Activated CD8-positive, alpha-beta T cell treated with anti-CD3 and anti-CD28 coated beads for 36 hours (primary cell): ENCODE measurements at regions of chr1 and their contacts with region 1.

Region 1: GRCh38 chr1:247390116-247390791 is 25.7 kb upstream of the NLRP3 start:
- DNase-seq: peak; percentile 92
- ATAC-seq: peak; percentile 99
- H3K4me3 Mint-ChIP-seq: peak overlapping the region; percentile 11
- H3K27ac Mint-ChIP-seq: peak overlapping the region; percentile 36
- H3K4me1 Mint-ChIP-seq: peaks cover 18% of the 10 kb centered on the region
- H3K27me3 Mint-ChIP-seq: no peaks in the 10 kb centered on the region
- CTCF ChIP-seq: peak; percentile 87

Region 2: GRCh38 chr1:247373721-247374141 is 16.5 kb before region 1 on chr1:
- CTCF ChIA-PET with region 1: interaction called, 31 read pairs
- POLR2A ChIA-PET with region 1: no interaction called
- intact Hi-C with region 1: no loop called
- DNase-seq: peak; percentile 80
- ATAC-seq: peak; percentile 82
- H3K4me3 Mint-ChIP-seq: peak overlapping the region; percentile 38
- H3K27ac Mint-ChIP-seq: no peak overlapping the region
- H3K4me1 Mint-ChIP-seq: peaks cover 6% of the 10 kb centered on the region
- H3K27me3 Mint-ChIP-seq: no peaks in the 10 kb centered on the region
- CTCF ChIP-seq: peak; percentile 49

Region 3: DNA sequence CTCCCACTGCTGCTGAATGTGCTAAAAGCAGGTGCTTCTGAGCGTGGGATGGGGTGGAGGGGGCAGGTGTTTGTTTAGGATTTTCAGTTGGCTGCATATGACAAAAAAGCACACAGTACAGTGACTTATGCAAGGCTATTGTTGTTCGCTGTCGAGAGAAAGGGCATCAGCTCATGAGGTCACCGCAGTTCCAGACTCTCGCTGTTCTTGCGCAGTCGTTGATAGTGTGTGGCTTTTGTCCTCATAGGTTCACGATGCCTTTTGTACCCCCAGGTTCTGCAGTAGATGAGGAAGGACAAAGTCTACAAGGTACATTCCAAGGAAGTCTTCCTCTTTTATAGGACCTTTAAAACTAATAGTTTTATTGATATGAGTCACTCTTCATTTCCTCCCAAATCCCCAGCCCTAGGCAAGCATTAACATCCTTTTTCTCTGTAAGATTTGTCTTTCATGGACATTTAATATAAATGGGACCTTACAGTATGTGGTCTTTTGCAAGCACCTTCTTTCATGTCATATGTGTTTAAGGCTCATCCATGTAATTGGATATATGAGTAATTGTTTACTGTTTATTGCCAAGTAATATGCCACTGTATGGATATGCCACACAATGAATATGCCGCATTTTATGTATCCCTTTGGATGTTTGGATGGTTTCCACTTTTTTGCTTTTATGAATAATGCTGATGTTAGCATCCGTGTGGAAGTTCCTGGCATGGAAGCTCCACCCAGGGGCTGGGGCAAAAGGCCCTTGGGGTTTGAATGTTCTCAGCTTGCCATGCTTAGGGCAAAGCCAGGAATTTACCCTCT is 11.3 kb after region 1 on chr1:
- CTCF ChIA-PET with region 1: interaction called, 11 read pairs
- POLR2A ChIA-PET with region 1: interaction called, 3 read pairs
- intact Hi-C with region 1: no loop called
- DNase-seq: no peak
- ATAC-seq: no peak
- H3K4me3 Mint-ChIP-seq: no peak overlapping the region
- H3K27ac Mint-ChIP-seq: no peak overlapping the region
- H3K4me1 Mint-ChIP-seq: peaks cover 1% of the 10 kb centered on the region
- H3K27me3 Mint-ChIP-seq: peaks cover 1% of the 10 kb centered on the region
- CTCF ChIP-seq: no peak

Region 4: GRCh38 chr1:247415423-247416361 is 25.4 kb after region 1 on chr1 and contains the start of gene NLRP3:
- CTCF ChIA-PET with region 1: interaction called, 29 read pairs
- POLR2A ChIA-PET with region 1: no interaction called
- intact Hi-C with region 1: no loop called
- DNase-seq: peak; percentile 66
- ATAC-seq: peak; percentile 78
- H3K4me3 Mint-ChIP-seq: peak within 1 kb of the TSS; percentile 76
- H3K27ac Mint-ChIP-seq: peak within 1 kb of the TSS; percentile 68
- H3K4me1 Mint-ChIP-seq: peaks cover 40% of the 10 kb centered on the region
- H3K27me3 Mint-ChIP-seq: no peaks in the 10 kb centered on the region
- CTCF ChIP-seq: no peak
- total RNA-seq, gene NLRP3: 3.2 to 3.6 TPM

Region 5: DNA sequence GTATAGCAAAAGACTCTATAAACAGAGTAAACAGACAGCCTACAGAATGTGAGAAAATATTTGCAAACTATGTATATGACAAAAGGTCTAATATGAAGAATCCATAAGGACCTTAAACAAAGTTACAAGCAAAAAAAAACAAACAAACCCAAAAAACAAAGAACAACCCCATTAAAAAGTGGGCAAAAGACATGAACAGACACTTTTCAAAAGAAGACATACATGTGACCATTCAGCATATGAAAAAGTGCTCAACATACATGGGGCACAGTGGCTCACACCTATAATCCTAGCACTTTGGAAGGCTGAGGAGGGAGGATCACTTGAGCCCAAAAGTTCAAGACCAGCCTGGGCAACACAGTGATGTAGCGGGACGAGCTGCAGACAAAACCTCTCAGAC is 85.5 kb after region 1 on chr1:
- CTCF ChIA-PET with region 1: interaction called, 15 read pairs
- POLR2A ChIA-PET with region 1: no interaction called
- intact Hi-C with region 1: no loop called
- DNase-seq: no peak
- ATAC-seq: no peak
- H3K4me3 Mint-ChIP-seq: no peak overlapping the region
- H3K27ac Mint-ChIP-seq: no peak overlapping the region
- H3K4me1 Mint-ChIP-seq: no peaks in the 10 kb centered on the region
- H3K27me3 Mint-ChIP-seq: no peaks in the 10 kb centered on the region
- CTCF ChIP-seq: no peak

Region 6: GRCh38 chr1:247487057-247487456 is 96.8 kb after region 1 on chr1:
- CTCF ChIA-PET with region 1: interaction called, 93 read pairs
- POLR2A ChIA-PET with region 1: no interaction called
- intact Hi-C with region 1: loop called (anchors 5 kb)
- DNase-seq: peak; percentile 37
- ATAC-seq: peak; percentile 70
- H3K4me3 Mint-ChIP-seq: no peak overlapping the region
- H3K27ac Mint-ChIP-seq: no peak overlapping the region
- H3K4me1 Mint-ChIP-seq: no peaks in the 10 kb centered on the region
- H3K27me3 Mint-ChIP-seq: peaks cover 10% of the 10 kb centered on the region
- CTCF ChIP-seq: peak; percentile 77

Region 7: DNA sequence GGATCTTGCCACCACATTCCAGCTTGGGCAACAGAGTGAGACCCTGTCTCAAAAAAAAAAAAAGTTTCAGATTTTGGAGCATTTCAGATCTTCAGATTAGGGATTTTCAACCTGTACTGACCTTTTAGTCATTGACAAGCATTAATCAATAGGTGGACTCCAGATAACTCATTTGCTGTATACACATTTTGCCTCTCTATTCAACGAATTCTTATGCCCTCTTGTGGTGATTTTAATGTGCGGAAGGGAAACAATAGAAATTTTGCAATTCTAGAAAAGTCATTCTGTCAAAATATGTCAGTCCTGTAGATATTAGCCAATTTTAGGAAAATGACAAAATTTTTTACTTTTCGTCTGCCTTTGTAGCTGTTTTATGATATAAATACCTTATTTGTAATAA is 186.2 kb after region 1 on chr1:
- CTCF ChIA-PET with region 1: interaction called, 4 read pairs
- POLR2A ChIA-PET with region 1: no interaction called
- intact Hi-C with region 1: loop called (anchors 1 kb)
- DNase-seq: no peak
- ATAC-seq: no peak
- H3K4me3 Mint-ChIP-seq: no peak overlapping the region
- H3K27ac Mint-ChIP-seq: no peak overlapping the region
- H3K4me1 Mint-ChIP-seq: no peaks in the 10 kb centered on the region
- H3K27me3 Mint-ChIP-seq: peaks cover 10% of the 10 kb centered on the region
- CTCF ChIP-seq: peak; percentile 59